Activated CD4-positive, alpha-beta memory T cell treated with anti-CD3 and anti-CD28 coated beads, Interleukin-2, amount 10 ng/mL, durations not matched to agents 7 days and 5 days (primary cell): ENCODE measurements at regions of chr15 and their contacts with region 1.

Region 1: DNA sequence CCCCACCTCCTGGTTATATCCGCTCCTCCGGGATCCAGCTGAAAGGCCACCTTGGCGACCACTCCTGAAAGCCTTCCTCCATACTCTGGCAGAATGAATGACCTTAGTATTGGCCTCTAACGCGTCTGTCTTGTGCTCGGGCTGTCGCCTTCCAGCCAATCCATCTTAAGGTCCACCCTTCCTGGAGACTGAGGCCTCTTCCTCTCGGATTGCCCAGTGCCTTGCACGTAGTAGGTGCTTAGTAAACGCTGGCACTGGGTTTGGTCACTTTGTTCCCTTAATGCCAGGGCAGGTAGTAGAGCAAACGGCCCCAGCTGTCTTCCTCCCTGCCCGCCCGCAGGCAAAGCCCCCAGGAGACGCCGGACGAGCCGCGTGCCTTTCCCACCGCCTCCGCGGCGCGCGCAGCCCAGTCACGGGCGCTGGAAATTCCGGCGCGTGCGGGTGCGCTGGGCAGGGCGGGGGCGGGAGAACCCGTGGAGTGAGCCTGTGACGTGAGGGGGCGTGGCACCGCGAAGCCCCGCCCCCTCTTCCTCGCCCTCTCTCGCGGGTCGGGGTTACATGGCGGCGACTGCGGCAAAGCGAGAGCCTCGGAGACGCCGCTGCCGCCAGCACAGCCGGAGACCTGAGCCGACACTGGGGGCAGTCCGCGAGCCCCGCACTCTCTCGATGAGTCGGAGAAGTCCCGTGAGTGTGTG is at the start of gene MAPK6:
- DNase-seq: peak; percentile 94
- H3K4me3 Mint-ChIP-seq: peak within 1 kb of the TSS; percentile 97
- H3K27ac Mint-ChIP-seq: peak within 1 kb of the TSS; percentile 100
- H3K4me1 Mint-ChIP-seq: peaks cover 46% of the 10 kb centered on the region
- H3K27me3 Mint-ChIP-seq: peaks cover 4% of the 10 kb centered on the region
- total RNA-seq, gene MAPK6: 44.9 to 47.9 TPM

Region 2: DNA sequence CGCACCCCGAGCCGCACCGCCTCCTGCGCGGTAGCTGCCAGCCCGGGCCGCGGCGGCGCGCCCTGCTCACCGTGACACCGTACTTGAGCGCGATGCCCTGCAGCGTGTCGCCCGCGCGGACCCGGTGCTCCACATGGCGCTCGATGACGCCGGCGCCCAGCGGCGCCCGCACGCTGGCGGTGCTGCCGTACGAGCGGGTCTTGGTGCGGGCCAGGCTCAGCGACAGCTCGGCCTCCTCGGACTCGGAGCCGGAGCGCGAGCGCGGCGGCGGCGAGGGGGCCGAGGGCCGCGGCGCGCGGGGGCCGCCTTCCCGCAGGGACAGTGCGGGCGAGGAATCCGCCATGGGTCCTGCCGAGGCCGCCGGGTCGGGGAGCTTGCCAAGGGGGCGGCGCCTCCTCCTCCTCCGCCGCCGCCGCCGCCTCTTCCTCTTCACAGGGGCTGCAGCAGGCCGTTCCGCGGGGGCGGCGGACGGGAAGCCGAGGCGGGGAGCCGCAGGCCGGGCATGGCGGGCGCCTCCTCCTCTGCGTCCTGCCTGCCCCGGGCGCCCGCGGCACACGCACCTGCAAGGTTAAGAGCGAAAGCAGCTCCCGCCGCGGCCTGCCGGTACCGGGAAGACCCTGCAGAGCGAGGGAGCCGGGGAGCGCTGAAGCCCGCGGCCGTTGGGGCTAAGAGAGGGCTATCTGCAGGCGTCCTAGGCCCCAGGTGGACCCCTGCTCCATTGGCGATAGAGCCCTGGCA is 281.4 kb before region 1 on chr15 and contains the start of gene LYSMD2:
- CTCF ChIA-PET with region 1: no interaction called
- POLR2A ChIA-PET with region 1: no interaction called
- DNase-seq: peak; percentile 68
- H3K4me3 Mint-ChIP-seq: peak within 1 kb of the TSS; percentile 81
- H3K27ac Mint-ChIP-seq: peak within 1 kb of the TSS; percentile 80
- H3K4me1 Mint-ChIP-seq: peaks cover 47% of the 10 kb centered on the region
- H3K27me3 Mint-ChIP-seq: no peaks in the 10 kb centered on the region
- total RNA-seq, gene LYSMD2: 14.8 to 14.9 TPM

Region 3: GRCh38 chr15:51982013-51982769 is 36.6 kb before region 1 on chr15:
- CTCF ChIA-PET with region 1: interaction called, 4 read pairs
- POLR2A ChIA-PET with region 1: interaction called, 15 read pairs
- DNase-seq: peak; percentile 80
- H3K4me3 Mint-ChIP-seq: peak overlapping the region; percentile 78
- H3K27ac Mint-ChIP-seq: peak overlapping the region; percentile 88
- H3K4me1 Mint-ChIP-seq: peaks cover 20% of the 10 kb centered on the region
- H3K27me3 Mint-ChIP-seq: no peaks in the 10 kb centered on the region

Region 4: GRCh38 chr15:52039925-52040781 is 21.3 kb after region 1 on chr15:
- CTCF ChIA-PET with region 1: interaction called, 5 read pairs
- POLR2A ChIA-PET with region 1: interaction called, 38 read pairs
- DNase-seq: no peak
- H3K4me3 Mint-ChIP-seq: no peak overlapping the region
- H3K27ac Mint-ChIP-seq: peak overlapping the region; percentile 16
- H3K4me1 Mint-ChIP-seq: peaks cover 40% of the 10 kb centered on the region
- H3K27me3 Mint-ChIP-seq: no peaks in the 10 kb centered on the region

Region 5: GRCh38 chr15:52078876-52079700 is 60.2 kb after region 1 on chr15:
- CTCF ChIA-PET with region 1: interaction called, 19 read pairs
- POLR2A ChIA-PET with region 1: interaction called, 17 read pairs
- DNase-seq: peak; percentile 83
- H3K4me3 Mint-ChIP-seq: no peak overlapping the region
- H3K27ac Mint-ChIP-seq: no peak overlapping the region
- H3K4me1 Mint-ChIP-seq: peaks cover 43% of the 10 kb centered on the region
- H3K27me3 Mint-ChIP-seq: no peaks in the 10 kb centered on the region

Region 6: DNA sequence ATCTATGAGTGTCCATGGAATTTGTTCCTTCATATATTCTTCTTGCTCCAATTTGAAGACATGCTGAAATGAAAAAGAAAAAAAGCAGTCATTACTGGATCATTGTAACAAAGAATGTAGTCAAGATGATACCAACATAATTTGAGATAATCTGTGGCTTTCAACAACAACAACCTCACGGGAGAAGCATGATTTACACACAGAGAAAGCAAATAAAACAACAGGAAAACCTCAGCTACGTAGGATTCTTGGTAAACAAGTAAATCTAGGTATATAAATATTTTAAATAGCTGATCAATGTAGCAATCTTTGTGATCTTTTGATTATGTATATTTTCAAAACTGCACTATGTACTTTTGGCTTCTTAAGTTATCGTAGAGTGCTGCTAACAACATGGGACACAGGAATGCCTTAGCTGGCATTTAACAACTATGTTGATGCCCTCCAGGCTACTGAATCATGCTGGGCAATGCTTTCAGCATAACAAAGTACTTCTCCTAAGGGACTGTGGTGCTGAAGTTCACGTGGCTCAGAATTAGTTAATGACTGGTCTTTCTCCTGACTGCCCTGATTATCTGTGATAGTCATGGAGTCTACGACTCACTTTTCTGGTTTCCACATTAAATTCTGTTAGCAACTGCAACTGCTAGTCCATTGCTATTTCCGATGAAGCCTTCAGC is 373.3 kb after region 1 on chr15:
- CTCF ChIA-PET with region 1: no interaction called
- POLR2A ChIA-PET with region 1: no interaction called
- DNase-seq: no peak
- H3K4me3 Mint-ChIP-seq: no peak overlapping the region
- H3K27ac Mint-ChIP-seq: no peak overlapping the region
- H3K4me1 Mint-ChIP-seq: peaks cover 8% of the 10 kb centered on the region
- H3K27me3 Mint-ChIP-seq: no peaks in the 10 kb centered on the region